ENCODE measurements at regions of chr14 and their contacts with region 1.

Region 1: DNA sequence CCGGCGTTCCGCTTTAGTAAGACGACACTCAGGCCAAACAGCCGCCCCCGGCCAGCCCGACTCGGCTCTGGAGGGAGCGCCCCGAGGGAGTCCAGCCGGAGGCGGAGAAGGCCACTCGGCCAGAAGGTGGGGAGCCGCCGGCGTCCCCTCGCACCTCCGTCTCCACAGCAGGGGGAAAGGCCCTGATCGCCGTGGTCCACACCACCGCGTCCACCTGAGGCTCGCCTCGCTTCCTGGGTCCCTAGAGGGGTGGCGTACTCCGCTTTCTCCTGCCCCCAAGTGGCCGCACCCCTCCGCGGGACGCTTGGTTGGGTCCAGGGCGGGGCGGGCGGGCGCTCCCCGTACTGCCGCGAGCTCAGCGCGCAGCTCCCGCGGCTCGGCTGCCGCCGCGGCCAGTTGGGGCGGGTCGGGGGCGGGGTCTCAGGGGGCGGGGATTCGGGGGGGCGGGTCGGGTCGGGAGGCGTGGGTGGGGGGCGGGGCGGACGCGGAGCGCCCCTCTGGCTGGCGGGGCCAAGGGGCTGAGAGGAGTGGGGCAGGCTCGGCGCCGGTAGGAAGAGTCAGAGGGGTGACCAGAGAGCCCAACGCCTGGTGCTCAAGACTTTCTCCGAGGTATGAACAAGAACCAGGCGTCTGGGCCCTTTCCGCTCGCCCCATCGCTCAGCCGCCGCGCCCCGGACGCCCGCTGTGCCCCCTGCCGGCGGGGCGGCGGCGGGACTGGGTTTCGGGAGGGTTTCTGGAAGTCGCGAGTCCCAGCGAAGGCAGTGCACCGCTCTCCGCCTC is at the start of gene FRMD6:
- DNase-seq: peak; percentile 90
- ATAC-seq: peak; percentile 86
- H3K4me3 Mint-ChIP-seq: peak within 1 kb of the TSS; percentile 80
- H3K27ac Mint-ChIP-seq: peak within 1 kb of the TSS; percentile 79
- H3K4me1 Mint-ChIP-seq: peaks cover 19% of the 10 kb centered on the region
- H3K27me3 Mint-ChIP-seq: peaks cover 12% of the 10 kb centered on the region
- total RNA-seq, gene FRMD6: 7.5 to 8.0 TPM

Region 2: DNA sequence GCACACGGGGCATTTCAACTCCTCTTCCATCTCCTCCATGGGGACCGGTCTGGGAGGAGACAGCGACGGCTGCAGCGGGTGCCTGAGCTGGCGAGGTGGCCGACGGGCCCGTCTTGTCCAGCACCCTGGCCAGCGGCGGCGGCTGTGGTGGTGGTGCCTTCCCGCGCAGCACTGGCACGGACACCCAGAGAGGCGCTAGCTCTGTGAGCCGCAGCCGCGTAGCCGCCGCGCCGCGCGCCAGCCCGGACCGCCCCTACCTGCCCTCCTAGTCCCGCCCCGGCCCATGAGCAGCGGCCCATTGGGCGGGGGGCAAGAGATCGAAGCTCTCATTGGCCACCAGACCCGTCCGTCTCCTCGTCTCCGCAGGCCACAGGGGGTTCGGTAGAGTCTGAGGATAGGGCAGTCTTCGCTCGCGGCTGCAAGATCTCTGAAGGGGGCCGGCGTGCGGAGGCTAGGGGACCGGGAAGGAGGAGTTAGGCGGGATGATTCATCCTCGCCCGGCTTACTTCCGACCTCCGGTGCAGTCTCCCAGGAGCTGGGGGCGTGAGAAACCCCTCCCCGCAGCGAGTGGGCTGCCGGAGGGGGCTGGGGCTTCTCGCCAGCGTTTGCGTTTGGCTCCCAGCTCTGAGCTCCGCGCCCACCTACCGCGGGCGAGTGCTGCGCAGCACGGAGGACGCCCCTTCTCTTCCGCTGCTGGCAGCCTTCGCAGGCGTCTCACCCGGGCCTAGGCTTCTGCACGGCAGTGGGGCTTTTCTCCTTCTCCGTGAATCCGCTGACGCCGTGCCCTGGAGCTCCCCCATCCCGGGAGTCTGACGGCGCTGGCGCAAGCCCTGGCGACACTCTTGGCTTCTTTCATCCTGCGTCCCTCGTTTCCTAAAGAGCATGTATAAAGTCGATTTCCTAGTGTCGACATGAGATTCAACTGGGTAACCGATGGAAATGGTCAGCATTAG is 556.4 kb before region 1 on chr14 and contains the start of gene TRIM9:
- CTCF ChIA-PET with region 1: interaction called, 3 read pairs
- POLR2A ChIA-PET with region 1: no interaction called
- intact Hi-C with region 1: loop called in 1 of 2 experiments (anchors 1 kb)
- DNase-seq: peak; percentile 97
- ATAC-seq: peak; percentile 97
- H3K4me3 Mint-ChIP-seq: peak within 1 kb of the TSS; percentile 79
- H3K27ac Mint-ChIP-seq: peak within 1 kb of the TSS; percentile 79
- H3K4me1 Mint-ChIP-seq: peaks cover 15% of the 10 kb centered on the region
- H3K27me3 Mint-ChIP-seq: peaks cover 10% of the 10 kb centered on the region
- total RNA-seq, gene TRIM9: 2.4 TPM

Region 3: DNA sequence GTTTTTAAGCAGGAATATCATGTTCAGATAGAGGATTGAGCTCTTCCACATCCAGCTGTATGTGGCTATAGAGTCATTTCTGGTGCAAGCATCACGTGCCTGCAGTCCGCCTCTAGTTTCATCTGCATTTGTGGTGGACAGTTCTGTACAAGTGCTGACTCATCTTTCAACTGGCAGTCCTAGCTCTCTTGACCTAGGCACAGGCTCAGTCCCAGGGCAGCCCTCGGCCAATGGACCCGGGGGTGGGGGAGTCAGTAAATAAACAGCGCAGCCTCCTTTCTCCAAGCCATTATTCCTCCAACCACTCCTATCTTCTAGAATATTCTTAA is 41.7 kb before region 1 on chr14:
- CTCF ChIA-PET with region 1: no interaction called
- POLR2A ChIA-PET with region 1: no interaction called
- intact Hi-C with region 1: loop called in 1 of 2 experiments (anchors 1 kb)
- DNase-seq: no peak
- ATAC-seq: no peak
- H3K4me3 Mint-ChIP-seq: no peak overlapping the region
- H3K27ac Mint-ChIP-seq: no peak overlapping the region
- H3K4me1 Mint-ChIP-seq: peaks cover 18% of the 10 kb centered on the region
- H3K27me3 Mint-ChIP-seq: peaks cover 11% of the 10 kb centered on the region

Region 4: DNA sequence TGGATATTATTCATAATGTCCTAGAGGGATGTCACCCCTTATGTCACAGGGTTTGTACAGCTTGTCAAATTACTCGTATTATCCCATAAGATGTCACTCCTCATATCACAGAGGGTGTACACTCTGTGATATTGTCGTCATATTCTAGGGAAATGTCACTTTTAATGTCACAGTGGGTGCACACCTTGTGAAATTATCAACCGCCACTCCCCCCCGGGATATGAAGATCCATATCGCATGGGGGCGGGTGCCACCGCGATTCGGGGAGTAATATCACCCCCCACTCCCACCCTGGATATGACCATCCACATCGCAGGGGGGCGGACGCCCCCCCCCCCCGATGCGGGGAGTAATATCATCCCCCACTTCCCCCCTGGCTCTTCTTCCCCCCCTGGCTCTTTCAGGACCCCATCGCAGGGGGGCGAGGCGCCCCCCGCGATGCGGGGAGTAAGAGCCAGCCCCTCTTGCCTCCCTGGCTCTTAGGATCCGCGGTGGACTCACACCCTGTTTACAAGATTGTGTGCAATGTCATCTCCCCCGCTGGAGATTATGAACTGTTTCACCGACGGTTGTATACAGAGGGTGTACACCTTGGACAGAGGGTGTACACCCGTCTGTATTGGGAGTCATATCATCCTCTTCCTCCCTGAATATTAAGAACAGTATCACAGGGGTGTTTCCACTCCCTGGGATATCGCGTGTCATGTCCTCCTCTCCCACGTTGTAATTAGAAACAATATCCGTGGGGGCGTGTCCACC is 93.0 kb after region 1 on chr14:
- CTCF ChIA-PET with region 1: interaction called, 5 read pairs
- POLR2A ChIA-PET with region 1: no interaction called
- intact Hi-C with region 1: loop called (anchors 5 kb)
- DNase-seq: peak; percentile 57
- ATAC-seq: peak; percentile 75
- H3K4me3 Mint-ChIP-seq: no peak overlapping the region
- H3K27ac Mint-ChIP-seq: no peak overlapping the region
- H3K4me1 Mint-ChIP-seq: no peaks in the 10 kb centered on the region
- H3K27me3 Mint-ChIP-seq: peaks cover 2% of the 10 kb centered on the region

Region 5: DNA sequence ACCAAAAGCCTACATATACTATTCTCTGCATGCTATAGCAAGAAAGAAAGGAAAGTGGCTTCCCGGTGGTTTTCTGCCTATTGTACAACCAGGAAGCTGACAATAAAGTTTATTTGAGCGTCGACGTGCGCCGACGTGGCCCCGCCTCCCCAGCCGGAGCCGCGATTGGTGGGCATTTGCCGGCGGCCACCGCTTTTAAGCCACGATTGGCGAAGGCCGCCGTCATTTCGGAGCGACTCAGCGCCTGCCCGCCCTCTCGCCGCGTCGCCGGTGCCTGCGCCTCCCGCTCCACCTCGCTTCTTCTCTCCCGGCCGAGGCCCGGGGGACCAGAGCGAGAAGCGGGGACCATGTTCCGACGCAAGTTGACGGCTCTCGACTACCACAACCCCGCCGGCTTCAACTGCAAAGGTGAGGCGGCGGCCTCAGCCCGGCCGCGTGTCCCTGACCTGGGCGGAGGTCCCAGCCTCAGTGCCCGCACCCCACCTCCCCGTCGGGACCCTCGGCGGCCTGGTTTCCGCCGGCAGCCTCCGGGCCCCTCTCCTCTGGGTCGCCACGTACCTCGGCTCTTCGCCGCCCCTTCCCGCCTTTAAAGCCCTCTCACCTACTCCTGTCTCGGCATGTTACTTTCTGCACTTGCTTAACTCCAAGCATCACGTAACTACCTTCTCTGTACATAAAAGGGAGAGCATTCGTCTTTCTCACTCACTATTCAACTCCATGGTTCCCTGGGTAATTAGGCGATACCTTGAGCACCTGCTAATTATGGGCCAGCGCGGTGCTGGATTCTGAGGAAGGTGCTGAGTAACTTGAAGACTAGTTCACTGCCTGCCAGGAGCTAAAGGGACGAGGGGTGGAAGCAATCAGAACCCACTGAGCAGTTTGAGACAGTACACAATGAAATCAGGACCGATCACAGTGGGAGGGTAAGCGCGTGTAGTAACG is 338.0 kb after region 1 on chr14 and contains the start of gene RTRAF:
- CTCF ChIA-PET with region 1: no interaction called
- POLR2A ChIA-PET with region 1: no interaction called
- intact Hi-C with region 1: loop called (anchors 1 to 10 kb)
- DNase-seq: peak; percentile 96
- ATAC-seq: peak; percentile 97
- H3K4me3 Mint-ChIP-seq: peak within 1 kb of the TSS; percentile 100
- H3K27ac Mint-ChIP-seq: peak within 1 kb of the TSS; percentile 98
- H3K4me1 Mint-ChIP-seq: peaks cover 40% of the 10 kb centered on the region
- H3K27me3 Mint-ChIP-seq: no peaks in the 10 kb centered on the region
- total RNA-seq, gene RTRAF: 232 to 254 TPM

Measured in activated CD4-positive, alpha-beta T cell treated with anti-CD3 and anti-CD28 coated beads for 36 hours (primary cell).